Endothelial cell of umbilical vein (primary cell): ENCODE measurements at regions of chr14 and their contacts with region 1.

Region 1: DNA sequence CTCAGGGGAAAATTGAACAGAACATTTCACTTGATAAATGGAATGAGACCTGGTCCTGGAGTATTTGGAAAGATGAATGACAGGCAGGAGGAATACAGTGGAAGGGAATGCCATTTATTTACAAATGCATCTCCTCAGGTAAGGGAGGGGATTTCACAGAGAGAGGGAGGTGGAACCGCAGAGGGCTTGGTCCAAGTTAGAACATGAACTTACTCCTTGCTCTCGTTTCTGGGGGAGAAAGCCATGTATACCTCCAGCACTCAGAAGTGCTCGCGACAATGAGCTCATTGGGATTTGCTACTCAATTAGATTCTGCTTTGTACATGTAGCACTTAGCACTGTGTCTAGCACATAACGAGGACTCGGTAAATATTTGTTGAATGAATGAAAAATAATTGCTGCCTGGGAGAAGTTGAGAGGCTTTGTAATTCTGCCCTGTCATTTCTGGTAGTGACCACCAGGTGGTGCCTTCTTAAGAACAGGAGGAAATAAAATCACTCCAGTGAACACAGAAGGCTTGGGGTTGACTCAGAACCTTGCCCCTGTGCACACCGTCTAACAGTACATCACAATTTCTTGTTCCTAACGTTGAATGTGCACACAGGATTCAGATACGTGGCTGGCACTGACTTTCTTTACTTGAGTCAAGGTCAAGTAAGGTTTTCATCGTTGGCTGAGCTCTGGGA is 91.6 kb downstream of the RGS6 start:
- DNase-seq: peak; percentile 2
- H3K4me3 ChIP-seq: no peak overlapping the region
- H3K27ac ChIP-seq: no peak overlapping the region
- H3K4me1 ChIP-seq: no peaks in the 10 kb centered on the region
- H3K27me3 ChIP-seq: no peaks in the 10 kb centered on the region
- CTCF ChIP-seq: peak; percentile 11 to 22
- POLR2A ChIP-seq: no peak

Region 2: GRCh38 chr14:72420725-72421474 is 397.0 kb after region 1 on chr14:
- CTCF ChIA-PET with region 1: no interaction called
- POLR2A ChIA-PET with region 1: no interaction called
- dilution Hi-C with region 1: no loop called
- intact Hi-C with region 1: loop called (anchors 1 kb)
- DNase-seq: peak; percentile 65
- H3K4me3 ChIP-seq: no peak overlapping the region
- H3K27ac ChIP-seq: no peak overlapping the region
- H3K4me1 ChIP-seq: no peaks in the 10 kb centered on the region
- H3K27me3 ChIP-seq: no peaks in the 10 kb centered on the region
- CTCF ChIP-seq: peak; percentile 79 to 92
- POLR2A ChIP-seq: no peak